ENCODE measurements at regions of chr6 and their contacts with region 1.

Region 1: GRCh38 chr6:127366281-127367022 is 23.0 kb upstream of the ECHDC1 start:
- DNase-seq: peak; percentile 92
- ATAC-seq: peak; percentile 93
- H3K4me3 ChIP-seq: peak overlapping the region; percentile 19 to 38
- H3K27ac ChIP-seq: peak overlapping the region; percentile 60; the same call in 1 of the 2 replicates
- H3K4me1 ChIP-seq: peaks cover 17 to 20% of the 10 kb centered on the region in 2 experiments
- H3K27me3 ChIP-seq: no peaks in the 10 kb centered on the region
- CTCF ChIP-seq: no peak
- POLR2A ChIP-seq: no peak
- RAD21 ChIP-seq: no peak

Region 2: GRCh38 chr6:127342946-127343808 is 23.3 kb before region 1 on chr6 and contains the start of gene ECHDC1:
- CTCF ChIA-PET with region 1: no interaction called
- POLR2A ChIA-PET with region 1: interaction called, 5 read pairs
- RAD21 ChIA-PET with region 1: no interaction called
- intact Hi-C with region 1: loop called (anchors 1 kb)
- DNase-seq: peak; percentile 62
- ATAC-seq: peak; percentile 83
- H3K4me3 ChIP-seq: peak within 1 kb of the TSS; percentile 80 to 92
- H3K27ac ChIP-seq: peak within 1 kb of the TSS; percentile 85
- H3K4me1 ChIP-seq: peaks cover 14 to 30% of the 10 kb centered on the region in 2 experiments
- H3K27me3 ChIP-seq: no peaks in the 10 kb centered on the region
- CTCF ChIP-seq: no peak
- POLR2A ChIP-seq: peak; percentile 74
- RAD21 ChIP-seq: no peak; the same call in 1 of the 2 replicates
- total RNA-seq, gene ECHDC1: 47.2 TPM

Region 3: DNA sequence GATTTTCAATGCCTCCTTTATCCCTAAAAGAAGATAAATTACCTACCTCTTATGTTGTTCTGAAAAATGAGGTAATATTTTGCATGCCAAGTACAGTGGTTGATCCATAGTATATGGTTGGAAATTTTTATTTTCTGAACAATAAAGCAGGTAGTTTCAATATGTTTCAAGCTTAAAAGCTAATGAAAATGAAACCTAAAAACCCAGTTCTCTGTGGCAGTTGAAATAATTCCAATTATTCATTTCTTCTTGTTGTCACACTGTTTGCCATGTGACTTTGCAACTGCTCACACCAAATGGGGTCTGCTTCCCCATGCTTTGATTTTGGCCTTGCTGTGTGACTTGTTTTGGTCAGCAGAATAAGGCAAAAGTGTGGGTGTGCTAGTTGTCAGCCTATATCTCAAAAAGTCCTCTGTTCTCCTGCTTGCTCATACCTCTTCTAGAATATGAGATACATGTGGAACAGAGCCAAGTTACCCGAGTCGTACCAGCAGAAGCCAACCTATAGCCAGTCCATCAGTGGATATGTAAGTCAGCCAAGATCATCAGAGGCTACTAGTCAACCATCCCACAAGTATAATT is 731.6 kb after region 1 on chr6:
- CTCF ChIA-PET with region 1: no interaction called
- POLR2A ChIA-PET with region 1: no interaction called
- RAD21 ChIA-PET with region 1: no interaction called
- intact Hi-C with region 1: loop called (anchors 5 kb)
- DNase-seq: no peak
- ATAC-seq: no peak
- H3K4me3 ChIP-seq: no peak overlapping the region
- H3K27ac ChIP-seq: no peak overlapping the region
- H3K4me1 ChIP-seq: no peaks in the 10 kb centered on the region
- H3K27me3 ChIP-seq: no peaks in the 10 kb centered on the region
- CTCF ChIP-seq: no peak
- POLR2A ChIP-seq: no peak
- RAD21 ChIP-seq: no peak

Measured in HCT116 (cell line).